Posterior cingulate gyrus (tissue), 11 donors: ENCODE measurements at regions of chr1 and their contacts with region 1.

Region 1: GRCh38 chr1:168572633-168573032 is 3.8 kb upstream of the XCL1 start:
- DNase-seq: no peak

Region 2: GRCh38 chr1:168342572-168343280 is 229.9 kb before region 1 on chr1:
- intact Hi-C with region 1: loop called (anchors 5 kb)
- DNase-seq: peak; percentile 79 to 98 (median 92)

Region 3: DNA sequence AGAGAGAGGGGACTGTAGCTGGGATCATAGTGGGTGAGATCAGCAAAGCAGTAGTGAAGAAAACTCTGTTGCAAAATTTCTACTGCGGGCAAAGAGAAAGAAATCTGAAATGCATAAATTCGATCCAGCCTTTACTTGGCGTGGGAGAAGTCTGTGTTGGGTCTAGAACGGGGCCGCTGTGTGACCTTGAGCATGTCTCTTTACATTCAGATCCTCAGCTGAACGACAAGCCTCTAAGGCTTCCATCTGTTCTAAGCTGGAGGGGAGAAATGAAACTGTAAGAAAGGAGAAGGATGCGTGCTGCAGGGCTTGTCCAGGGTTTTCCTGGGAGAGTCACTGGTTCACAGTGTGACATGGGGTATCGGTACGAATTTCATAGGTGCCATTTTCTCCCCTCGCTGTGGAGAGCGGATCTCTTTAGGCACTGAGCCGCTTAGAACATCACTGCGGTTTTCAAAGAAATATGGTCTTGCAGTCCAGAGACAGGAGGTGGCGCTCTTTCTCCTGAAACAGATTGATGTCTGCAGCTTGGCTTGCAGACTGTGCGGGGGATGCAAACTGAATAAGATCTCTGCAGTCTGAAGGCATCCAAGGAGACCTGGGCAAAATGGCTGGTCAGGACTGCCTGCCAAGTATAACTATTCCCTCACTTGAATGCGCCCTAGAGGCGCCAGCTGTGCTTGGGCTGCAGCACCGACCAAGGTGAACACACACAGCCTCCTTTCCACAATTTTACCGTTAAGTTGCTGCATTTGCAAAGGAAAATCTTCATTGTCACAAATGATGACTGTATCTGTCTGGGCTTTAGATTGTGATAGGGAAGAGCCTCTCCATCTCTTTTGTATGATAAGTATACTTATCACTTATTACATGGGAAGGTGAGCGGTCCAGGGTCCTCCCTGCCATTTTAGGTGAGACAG is 132.9 kb before region 1 on chr1:
- intact Hi-C with region 1: loop called (anchors 10 kb)
- DNase-seq: peak; percentile 60 to 96 (median 77)